Psoas muscle (tissue), 8 donors: ENCODE measurements at regions of chr2 and their contacts with region 1.

Region 1: DNA sequence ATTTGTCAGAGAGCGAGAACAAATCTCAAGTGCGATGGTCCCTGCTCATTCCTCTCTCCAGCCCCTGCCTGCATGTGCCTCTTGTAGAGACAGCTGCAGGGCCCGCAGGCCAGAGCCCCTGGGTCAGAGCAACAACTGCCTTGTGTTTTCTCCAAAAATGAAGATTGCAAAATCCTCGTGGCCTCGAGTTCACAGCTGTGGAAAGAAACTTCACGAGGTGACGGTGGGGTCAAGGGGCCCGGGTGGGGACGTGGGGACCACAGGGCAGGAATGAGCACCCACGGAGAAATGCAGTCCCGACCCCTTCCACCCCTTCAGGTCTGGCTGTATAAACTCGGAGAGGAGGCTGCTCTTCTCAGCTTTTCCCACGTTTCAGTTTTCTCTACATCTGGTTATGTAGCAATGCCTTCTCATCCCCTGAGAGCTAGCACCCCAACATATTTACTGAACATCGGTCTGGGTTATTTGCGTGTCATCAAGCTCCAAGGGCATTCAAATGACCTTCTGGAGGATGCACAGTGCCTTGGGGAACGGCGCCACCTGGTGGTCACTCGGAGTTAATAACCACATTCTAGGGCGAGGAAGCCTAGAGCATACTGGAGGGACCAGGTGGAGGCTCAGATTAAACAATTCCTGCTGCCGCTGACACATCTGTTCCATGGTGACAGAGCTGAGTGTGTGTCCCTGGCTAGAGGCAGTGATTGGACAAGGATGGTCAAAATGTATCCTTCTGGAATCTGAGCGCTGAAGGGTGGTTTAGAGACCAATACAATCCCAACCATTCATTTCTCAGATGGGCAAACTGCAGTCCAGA is 91.4 kb upstream of the CYRIA start:
- DNase-seq: peak; percentile 77 to 90
- ATAC-seq: peak; percentile 92 to 97 (median 93)
- H3K4me3 ChIP-seq: no peak overlapping the region
- H3K27ac ChIP-seq: peak overlapping the region; percentile 0
- H3K4me1 ChIP-seq: no peaks in the 10 kb centered on the region
- H3K27me3 ChIP-seq: no peaks in the 10 kb centered on the region
- CTCF ChIP-seq: peak; percentile 95

Region 2: GRCh38 chr2:15939854-15940660 is 817.0 kb before region 1 on chr2 and contains the start of gene MYCN:
- intact Hi-C with region 1: loop called in 1 of 2 experiments (anchors 5 kb)
- DNase-seq: peak in 1 of 2 donors; percentile 58
- ATAC-seq: peak; percentile 27 to 62 (median 40)
- H3K4me3 ChIP-seq: peak within 1 kb of the TSS; percentile 63
- H3K27ac ChIP-seq: no peak within 1 kb of the TSS
- H3K4me1 ChIP-seq: peaks cover 29% of the 10 kb centered on the region
- H3K27me3 ChIP-seq: peaks cover 0 to 38% (median 11%) of the 10 kb centered on the region in 3 donors
- CTCF ChIP-seq: no peak
- total RNA-seq, gene MYCN: 0.25 to 0.36 (median 0.30) TPM

Region 3: DNA sequence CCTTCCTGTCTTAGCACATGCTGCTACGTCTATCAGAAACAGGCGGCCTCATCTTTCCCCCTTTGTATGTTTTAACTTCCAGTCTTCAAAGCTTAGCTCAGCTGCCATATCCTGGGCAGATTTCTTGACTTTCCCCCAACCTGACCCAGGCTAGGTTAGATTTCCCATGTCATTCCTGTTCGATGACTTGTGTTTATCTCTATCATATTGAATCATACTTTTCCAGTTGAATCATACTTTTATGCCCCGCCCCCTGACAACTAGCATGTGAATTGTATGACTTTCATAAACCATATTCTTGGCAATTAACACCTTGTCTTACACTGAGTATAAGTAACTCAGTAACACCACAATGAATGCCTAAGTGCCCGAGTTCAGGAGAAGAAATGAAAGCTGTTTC is 219.7 kb before region 1 on chr2:
- intact Hi-C with region 1: loop called in 1 of 2 experiments (anchors 10 kb)
- DNase-seq: no peak
- ATAC-seq: no peak
- H3K4me3 ChIP-seq: no peak overlapping the region
- H3K27ac ChIP-seq: no peak overlapping the region
- H3K4me1 ChIP-seq: no peaks in the 10 kb centered on the region
- H3K27me3 ChIP-seq: peaks cover 0 to 2% (median 0%) of the 10 kb centered on the region in 3 donors
- CTCF ChIP-seq: no peak

Region 4: GRCh38 chr2:16617282-16618261 is 139.5 kb before region 1 on chr2:
- intact Hi-C with region 1: loop called (anchors 2 to 5 kb)
- DNase-seq: no peak
- ATAC-seq: peak; percentile 26 to 66 (median 48)
- H3K4me3 ChIP-seq: no peak overlapping the region
- H3K27ac ChIP-seq: no peak overlapping the region
- H3K4me1 ChIP-seq: peaks cover 22% of the 10 kb centered on the region
- H3K27me3 ChIP-seq: no peaks in the 10 kb centered on the region
- CTCF ChIP-seq: peak; percentile 55

Region 5: DNA sequence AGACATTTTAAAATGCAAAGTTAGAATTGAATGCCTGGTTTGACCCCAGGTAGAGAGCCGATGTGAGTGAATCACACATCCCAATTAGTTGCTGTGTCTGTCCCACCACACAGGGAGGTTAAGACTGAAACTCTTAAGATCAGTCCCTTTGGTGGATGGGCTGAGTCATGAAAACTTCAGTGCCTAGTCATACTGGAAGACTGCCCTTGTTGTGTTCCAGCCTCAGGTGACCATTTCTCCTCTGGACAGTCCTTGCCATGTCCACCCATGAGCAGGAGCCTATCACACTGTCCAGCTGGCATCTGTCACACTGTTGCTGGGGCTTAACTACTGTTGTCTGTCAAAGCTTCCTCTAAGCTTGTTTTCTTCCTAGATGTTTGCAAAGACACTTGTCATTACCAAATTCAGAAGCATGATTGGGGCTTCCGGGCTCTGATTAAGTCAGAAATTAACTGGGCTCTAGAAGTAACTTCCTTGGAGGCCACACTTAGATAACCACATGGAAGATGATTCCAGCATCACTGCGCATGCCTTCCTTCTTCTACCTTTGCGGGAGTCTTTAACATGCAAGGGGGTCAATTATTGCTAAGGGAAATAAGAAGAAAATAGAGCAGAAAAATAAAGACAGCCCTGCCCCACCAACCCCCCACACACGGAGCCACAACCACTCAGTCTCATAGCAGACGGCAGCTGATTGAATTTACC is 112.7 kb before region 1 on chr2:
- intact Hi-C with region 1: loop called (anchors 5 kb)
- DNase-seq: no peak
- ATAC-seq: peak; percentile 80 to 95 (median 92)
- H3K4me3 ChIP-seq: no peak overlapping the region
- H3K27ac ChIP-seq: peak overlapping the region; percentile 62
- H3K4me1 ChIP-seq: peaks cover 42% of the 10 kb centered on the region
- H3K27me3 ChIP-seq: no peaks in the 10 kb centered on the region
- CTCF ChIP-seq: no peak